ENCODE measurements at regions of chr6 and their contacts with region 1.

Region 1: DNA sequence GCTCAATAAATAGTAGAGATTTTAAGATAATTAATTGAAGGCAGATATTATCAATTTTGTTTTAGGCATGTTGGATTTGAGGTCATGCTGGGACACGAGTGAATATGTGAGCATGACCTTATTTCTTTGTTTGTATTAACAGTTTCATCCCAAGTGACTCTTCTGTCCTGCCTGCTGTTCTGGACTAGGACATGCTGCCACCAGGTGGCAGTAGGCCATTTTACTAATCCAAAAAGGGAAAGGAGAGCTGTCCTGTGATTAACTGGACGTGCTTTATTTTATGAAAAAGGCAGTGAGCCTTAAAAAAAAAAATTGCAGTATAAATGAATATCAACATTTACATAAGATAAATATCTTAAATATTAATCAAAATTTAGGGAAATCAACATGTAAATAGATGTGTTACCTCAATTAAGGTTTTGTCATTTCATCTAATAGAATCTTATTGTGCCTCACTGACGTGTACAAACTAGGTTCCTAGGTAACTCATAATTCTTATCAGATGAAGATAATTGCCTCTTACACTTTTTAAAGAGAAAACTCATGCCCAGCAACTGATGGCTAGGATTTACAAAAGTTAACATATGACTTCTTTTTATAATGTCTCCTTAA is 49.8 kb downstream of the FRK start:
- DNase-seq: peak; percentile 65
- H3K4me3 Mint-ChIP-seq: no peak overlapping the region
- H3K27ac Mint-ChIP-seq: no peak overlapping the region
- H3K4me1 Mint-ChIP-seq: peaks cover 13% of the 10 kb centered on the region
- H3K27me3 Mint-ChIP-seq: peaks cover 7% of the 10 kb centered on the region

Region 2: DNA sequence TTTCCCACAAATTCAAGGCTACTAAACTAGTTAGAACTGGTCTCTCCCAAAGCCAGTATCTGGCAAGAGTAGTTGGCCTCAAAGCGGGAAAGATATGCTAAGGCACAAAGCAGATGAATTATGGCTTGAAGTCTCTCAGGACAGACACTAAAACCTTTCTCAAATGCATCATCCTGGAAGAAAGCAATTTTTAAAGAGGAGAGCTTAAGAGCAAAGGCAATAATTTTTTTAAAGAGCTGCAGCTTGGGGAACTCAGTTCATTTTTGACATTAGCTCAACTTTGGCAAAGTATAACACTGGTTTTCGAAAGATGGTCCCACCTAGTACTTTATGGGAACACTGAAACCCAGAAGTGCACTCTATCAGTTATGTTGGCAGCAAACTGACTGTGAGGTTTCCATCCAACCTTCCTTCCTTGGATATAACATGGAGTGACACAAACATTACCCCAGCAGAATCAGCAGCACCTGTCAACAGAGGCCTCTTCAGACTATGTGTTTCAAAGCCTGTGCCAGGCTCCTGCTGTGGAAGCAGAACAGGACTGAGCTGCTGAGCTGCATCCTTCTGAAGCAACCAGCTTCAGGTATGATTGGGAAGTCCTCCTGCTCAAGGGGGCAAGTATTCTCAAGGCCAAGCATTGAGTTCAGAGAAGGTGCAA is 815.8 kb before region 1 on chr6:
- CTCF ChIA-PET with region 1: no interaction called
- POLR2A ChIA-PET with region 1: no interaction called
- intact Hi-C with region 1: no loop called
- DNase-seq: no peak
- H3K4me3 Mint-ChIP-seq: no peak overlapping the region
- H3K27ac Mint-ChIP-seq: no peak overlapping the region
- H3K4me1 Mint-ChIP-seq: no peaks in the 10 kb centered on the region
- H3K27me3 Mint-ChIP-seq: no peaks in the 10 kb centered on the region

Region 3: DNA sequence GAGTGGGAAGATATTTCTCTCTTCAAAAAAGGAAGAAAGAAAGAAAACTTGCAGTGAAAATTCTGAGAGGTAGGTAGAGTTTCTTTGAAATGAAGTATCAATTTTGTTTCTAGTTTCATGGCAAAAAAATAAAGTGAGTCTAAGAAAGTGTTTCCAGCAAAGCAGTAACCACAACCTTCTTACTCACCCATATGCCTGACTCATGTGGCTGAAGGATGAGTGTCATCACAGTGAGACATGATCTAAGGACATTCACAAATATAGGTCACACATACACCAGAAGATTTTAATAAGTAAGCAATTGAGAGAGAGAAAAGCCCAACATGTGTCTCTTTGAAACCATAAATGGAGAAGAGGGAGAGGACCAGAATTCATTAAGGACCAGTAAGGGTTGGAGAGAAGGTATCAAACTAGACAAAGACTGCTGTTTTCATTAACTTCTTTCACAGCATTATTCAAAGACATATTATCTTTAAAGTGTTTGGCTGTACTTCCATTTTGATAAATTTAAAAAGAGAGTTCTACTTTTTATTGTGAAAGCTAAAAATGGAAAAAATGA is 119.7 kb before region 1 on chr6:
- CTCF ChIA-PET with region 1: interaction called, 4 read pairs
- POLR2A ChIA-PET with region 1: no interaction called
- intact Hi-C with region 1: loop called (anchors 2 kb)
- DNase-seq: peak; percentile 15
- H3K4me3 Mint-ChIP-seq: no peak overlapping the region
- H3K27ac Mint-ChIP-seq: peak overlapping the region; percentile 58
- H3K4me1 Mint-ChIP-seq: peaks cover 6% of the 10 kb centered on the region
- H3K27me3 Mint-ChIP-seq: peaks cover 1% of the 10 kb centered on the region

Region 4: DNA sequence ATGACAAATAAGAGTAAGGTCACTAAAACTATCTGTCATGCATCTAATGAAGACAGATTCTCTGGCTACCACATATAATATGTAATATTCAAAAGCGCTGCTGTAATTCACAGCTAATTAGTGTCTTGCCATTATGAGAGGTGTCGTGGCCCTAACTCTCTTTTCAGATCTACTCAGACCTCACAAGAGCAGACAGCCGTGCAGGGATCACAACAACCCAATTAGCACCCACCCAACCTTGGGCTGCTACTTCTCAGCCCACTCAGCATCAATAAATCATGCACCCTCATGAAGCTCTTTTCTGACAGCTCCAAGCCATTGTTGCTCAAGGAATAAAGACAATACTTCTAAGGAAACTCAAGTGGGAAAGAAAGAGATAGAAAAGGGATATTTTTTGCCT is 11.7 kb before region 1 on chr6:
- CTCF ChIA-PET with region 1: no interaction called
- POLR2A ChIA-PET with region 1: no interaction called
- intact Hi-C with region 1: no loop called
- DNase-seq: no peak
- H3K4me3 Mint-ChIP-seq: no peak overlapping the region
- H3K27ac Mint-ChIP-seq: no peak overlapping the region
- H3K4me1 Mint-ChIP-seq: no peaks in the 10 kb centered on the region
- H3K27me3 Mint-ChIP-seq: peaks cover 7% of the 10 kb centered on the region

Region 5: GRCh38 chr6:116027801-116028200 is 16.9 kb after region 1 on chr6:
- CTCF ChIA-PET with region 1: interaction called, 5 read pairs
- POLR2A ChIA-PET with region 1: no interaction called
- intact Hi-C with region 1: loop called (anchors 1 kb)
- DNase-seq: no peak
- H3K4me3 Mint-ChIP-seq: no peak overlapping the region
- H3K27ac Mint-ChIP-seq: no peak overlapping the region
- H3K4me1 Mint-ChIP-seq: peaks cover 3% of the 10 kb centered on the region
- H3K27me3 Mint-ChIP-seq: no peaks in the 10 kb centered on the region

Region 6: DNA sequence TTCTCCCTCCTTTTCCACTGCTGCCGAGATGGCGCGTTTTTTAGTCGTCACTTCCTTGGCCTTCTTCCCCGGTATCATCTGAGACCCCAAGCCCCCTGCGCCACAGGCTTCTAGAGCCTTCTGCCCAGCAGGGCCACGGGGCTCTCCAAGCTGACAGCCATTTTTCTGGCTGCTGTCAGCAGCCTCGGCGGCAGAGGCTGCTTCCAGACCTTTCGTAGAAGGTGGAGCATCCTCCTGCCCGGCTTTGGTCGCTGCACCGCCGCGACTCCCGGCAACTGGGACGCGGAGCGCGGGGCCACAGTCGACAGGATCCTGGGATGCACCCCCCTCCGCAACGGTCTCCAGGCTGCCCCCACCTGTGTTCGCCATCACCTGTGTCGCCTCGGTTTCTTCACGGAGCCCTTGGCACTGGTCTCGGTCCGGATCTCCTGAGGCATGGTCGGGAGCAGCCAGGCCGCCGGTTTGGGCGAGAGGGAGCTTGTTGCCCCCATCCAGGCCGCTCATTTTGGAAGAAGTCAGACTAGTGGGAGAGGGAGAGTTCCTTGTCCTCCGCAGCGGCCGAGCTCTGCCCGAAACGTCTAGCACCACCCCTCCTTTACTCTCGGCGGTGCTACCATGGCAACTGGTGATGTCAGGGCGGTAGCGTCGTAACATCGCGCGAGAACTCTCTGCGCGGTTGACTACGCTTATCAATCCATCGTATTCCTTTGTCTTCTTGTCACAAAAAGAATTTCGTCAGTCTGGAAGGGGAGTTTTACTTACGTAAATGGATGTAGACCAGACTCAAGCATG is 242.8 kb after region 1 on chr6 and contains the start of gene TSPYL4:
- CTCF ChIA-PET with region 1: no interaction called
- POLR2A ChIA-PET with region 1: no interaction called
- intact Hi-C with region 1: loop called (anchors 1 kb)
- DNase-seq: peak; percentile 95
- H3K4me3 Mint-ChIP-seq: no peak within 1 kb of the TSS
- H3K27ac Mint-ChIP-seq: no peak within 1 kb of the TSS
- H3K4me1 Mint-ChIP-seq: peaks cover 8% of the 10 kb centered on the region
- H3K27me3 Mint-ChIP-seq: no peaks in the 10 kb centered on the region
- total RNA-seq, gene TSPYL4: 10.5 to 11.1 TPM

Measured in activated CD4-positive, alpha-beta memory T cell treated with anti-CD3 and anti-CD28 coated beads for 36 hours (primary cell).